GM23248 (cell line): ENCODE measurements at regions of chr12 and their contacts with region 1.

Region 1: GRCh38 chr12:64890873-64891468 is 66.5 kb downstream of the TBC1D30 start:
- DNase-seq: peak; percentile 75
- H3K4me3 ChIP-seq: no peak overlapping the region
- H3K27ac ChIP-seq: no peak overlapping the region
- H3K4me1 ChIP-seq: peaks cover 26% of the 10 kb centered on the region
- H3K27me3 ChIP-seq: 0 out of 2 replicates have a peak, but pooled peaks cover 3% of the 10 kb centered on the region

Region 2: GRCh38 chr12:64796208-64796845 is 94.6 kb before region 1 on chr12:
- in situ Hi-C with region 1: no loop called
- DNase-seq: peak; percentile 91
- H3K4me3 ChIP-seq: peak overlapping the region; percentile 26; the same call in 1 of the 2 replicates
- H3K27ac ChIP-seq: no peak overlapping the region
- H3K4me1 ChIP-seq: no peaks in the 10 kb centered on the region
- H3K27me3 ChIP-seq: peaks cover 14% of the 10 kb centered on the region; the same call in 1 of the 2 replicates

Region 3: DNA sequence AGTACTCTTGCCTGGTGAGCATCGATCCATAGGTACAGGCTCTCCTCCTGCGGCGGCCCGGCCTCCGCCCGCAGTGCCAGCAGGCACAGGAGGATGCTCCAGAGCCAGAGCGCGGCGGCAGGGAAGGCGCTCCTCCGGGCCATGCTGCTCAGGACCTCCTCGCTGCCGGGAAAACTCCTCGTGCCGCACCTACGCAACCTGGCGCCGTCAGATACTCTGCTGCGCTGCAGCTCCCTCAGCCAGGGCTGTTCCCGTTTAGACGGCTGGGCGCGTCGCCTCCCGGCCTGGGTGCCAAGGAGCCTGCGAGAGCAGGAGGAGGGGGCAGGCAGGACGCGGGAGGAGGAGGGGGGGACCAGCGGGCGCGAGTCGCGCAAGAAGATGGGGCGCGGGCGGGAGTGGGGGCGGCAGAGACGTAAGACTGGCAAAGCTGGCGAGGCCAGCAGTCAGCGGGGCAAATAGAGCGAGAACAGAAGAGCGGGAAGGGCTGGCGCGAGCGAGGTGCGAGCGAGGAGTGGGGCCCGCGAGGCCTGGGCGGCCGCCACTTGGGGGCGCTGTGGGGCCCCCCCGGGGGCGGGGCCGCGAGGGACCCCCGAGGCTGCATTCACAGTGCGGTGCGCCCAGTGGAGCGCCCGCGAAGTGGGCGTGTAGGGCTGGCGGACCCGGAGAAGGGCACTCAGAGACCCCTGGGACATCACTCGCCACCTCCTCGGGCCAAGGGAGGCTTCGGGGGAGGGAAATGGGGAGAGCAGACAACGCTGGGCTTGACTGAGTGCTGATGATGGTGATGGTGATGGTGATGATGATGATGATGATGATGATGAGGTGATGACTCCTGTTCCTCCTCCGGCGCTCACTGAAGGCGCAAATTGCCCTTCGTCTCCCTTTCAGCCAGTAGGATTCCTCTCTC is 230.3 kb after region 1 on chr12 and contains the start of gene WIF1:
- in situ Hi-C with region 1: loop called (anchors 25 kb)
- DNase-seq: peak; percentile 38
- H3K4me3 ChIP-seq: peak within 1 kb of the TSS; percentile 48
- H3K27ac ChIP-seq: no peak within 1 kb of the TSS
- H3K4me1 ChIP-seq: no peaks in the 10 kb centered on the region; the same call in 1 of the 2 replicates
- H3K27me3 ChIP-seq: peaks cover 83% of the 10 kb centered on the region
- total RNA-seq, gene WIF1: not detected in 2 replicates